ENCODE measurements at regions of chrX and their contacts with region 1.

Region 1: GRCh38 chrX:149512225-149512885 is 7.2 kb upstream of the IDS start:
- DNase-seq: peak; percentile 65
- H3K4me3 Mint-ChIP-seq: no peak overlapping the region
- H3K27ac Mint-ChIP-seq: peak overlapping the region; percentile 62
- H3K4me1 Mint-ChIP-seq: peaks cover 52% of the 10 kb centered on the region
- H3K27me3 Mint-ChIP-seq: peaks cover 15% of the 10 kb centered on the region

Region 2: GRCh38 chrX:149198980-149199732 is 313.2 kb before region 1 on chrX:
- CTCF ChIA-PET with region 1: no interaction called
- DNase-seq: no peak
- H3K4me3 Mint-ChIP-seq: no peak overlapping the region
- H3K27ac Mint-ChIP-seq: no peak overlapping the region
- H3K4me1 Mint-ChIP-seq: no peaks in the 10 kb centered on the region
- H3K27me3 Mint-ChIP-seq: peaks cover 3% of the 10 kb centered on the region

Region 3: GRCh38 chrX:149527705-149528104 is 15.3 kb after region 1 on chrX:
- CTCF ChIA-PET with region 1: interaction called, 21 read pairs
- DNase-seq: peak; percentile 46
- H3K4me3 Mint-ChIP-seq: no peak overlapping the region
- H3K27ac Mint-ChIP-seq: peak overlapping the region; percentile 73
- H3K4me1 Mint-ChIP-seq: peaks cover 32% of the 10 kb centered on the region
- H3K27me3 Mint-ChIP-seq: no peaks in the 10 kb centered on the region

Region 4: DNA sequence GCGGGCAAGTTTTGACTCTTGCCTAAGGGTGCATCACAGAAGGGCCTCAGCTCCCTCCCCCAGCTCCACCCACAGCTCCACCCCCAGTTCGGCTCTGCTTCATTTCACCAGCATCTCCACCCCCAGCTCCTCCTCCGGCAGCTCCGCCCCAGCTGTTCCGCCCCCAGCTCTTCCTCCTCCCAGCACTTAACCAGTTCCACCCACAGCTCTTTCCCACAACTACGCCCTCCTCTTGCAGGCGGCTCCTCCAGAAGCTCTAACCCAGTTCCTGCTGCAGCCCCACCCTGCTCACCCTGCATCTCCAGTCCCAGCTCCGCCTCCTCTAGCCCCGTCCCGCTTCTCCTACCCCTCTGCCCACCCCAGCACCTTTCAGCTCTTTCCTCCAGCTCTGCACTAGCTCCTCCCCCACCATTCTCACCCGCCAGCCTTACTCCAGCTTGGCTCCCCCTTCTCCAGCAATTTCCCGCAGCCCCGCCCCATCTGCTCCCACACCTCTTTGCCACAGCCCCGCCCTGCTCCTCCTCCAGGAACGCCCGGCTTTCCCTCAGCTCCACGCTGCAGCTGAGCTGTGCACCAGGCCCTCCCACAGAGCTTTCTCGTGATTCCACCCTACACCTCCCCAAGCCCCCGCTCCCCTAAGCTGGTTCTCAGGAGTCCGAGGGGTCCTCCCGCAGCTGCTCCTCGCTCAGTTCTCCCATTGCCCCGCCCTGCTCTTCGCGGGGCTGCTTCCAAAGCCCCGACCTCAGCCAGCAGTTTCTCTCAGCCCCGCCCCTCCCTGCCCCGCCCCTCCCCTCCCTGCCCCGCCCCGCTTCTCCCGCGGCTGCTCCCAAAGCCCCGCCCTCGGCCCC is 27.2 kb after region 1 on chrX:
- CTCF ChIA-PET with region 1: interaction called, 10 read pairs
- DNase-seq: peak; percentile 94
- H3K4me3 Mint-ChIP-seq: peak overlapping the region; percentile 84
- H3K27ac Mint-ChIP-seq: peak overlapping the region; percentile 95
- H3K4me1 Mint-ChIP-seq: peaks cover 10% of the 10 kb centered on the region
- H3K27me3 Mint-ChIP-seq: no peaks in the 10 kb centered on the region

Measured in activated naive CD4-positive, alpha-beta T cell treated with anti-CD3 and anti-CD28 coated beads, Interleukin-2, amount 10 ng/mL, durations not matched to agents 7 days and 5 days (primary cell).